Aorta (tissue), 5 donors: ENCODE measurements at regions of chr11 and their contacts with region 1.

Region 1: GRCh38 chr11:81840380-81840779 is 893.3 kb downstream of the FAM181B start:
- DNase-seq: no peak
- ATAC-seq: no peak
- H3K4me3 ChIP-seq: no peak overlapping the region
- H3K27ac ChIP-seq: no peak overlapping the region
- H3K4me1 ChIP-seq: peaks cover 4 to 7% of the 10 kb centered on the region in 2 donors
- H3K27me3 ChIP-seq: no peaks in the 10 kb centered on the region

Region 2: DNA sequence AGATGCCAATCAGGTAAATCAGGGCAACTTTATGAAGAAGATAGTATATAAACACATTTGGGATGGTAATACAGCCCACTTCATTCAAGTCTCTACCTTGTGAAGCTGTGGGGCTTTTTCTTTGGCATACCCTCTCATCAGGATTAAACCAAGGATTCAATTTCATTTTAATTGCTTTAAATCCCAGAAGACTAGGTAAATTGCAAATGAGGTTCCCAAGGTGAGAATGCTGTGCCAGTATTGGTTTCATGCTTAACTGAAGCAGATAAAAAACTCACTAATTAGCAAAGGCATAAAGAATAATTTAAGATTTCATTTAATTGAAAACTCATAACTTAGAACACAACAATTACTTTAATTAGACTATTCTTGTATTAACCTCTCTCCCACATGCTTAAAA is 324.8 kb before region 1 on chr11:
- intact Hi-C with region 1: no loop called
- DNase-seq: no peak
- ATAC-seq: no peak
- H3K4me3 ChIP-seq: no peak overlapping the region
- H3K27ac ChIP-seq: no peak overlapping the region
- H3K4me1 ChIP-seq: no peaks in the 10 kb centered on the region
- H3K27me3 ChIP-seq: no peaks in the 10 kb centered on the region

Region 3: GRCh38 chr11:81802591-81802990 is 37.8 kb before region 1 on chr11:
- intact Hi-C with region 1: no loop called
- DNase-seq: no peak
- ATAC-seq: no peak
- H3K4me3 ChIP-seq: no peak overlapping the region
- H3K27ac ChIP-seq: no peak overlapping the region
- H3K4me1 ChIP-seq: no peaks in the 10 kb centered on the region
- H3K27me3 ChIP-seq: no peaks in the 10 kb centered on the region

Region 4: GRCh38 chr11:81892770-81893635 is 52.6 kb after region 1 on chr11:
- intact Hi-C with region 1: loop called in 1 of 2 experiments (anchors 10 kb)
- DNase-seq: no peak
- ATAC-seq: peak; percentile 44
- H3K4me3 ChIP-seq: no peak overlapping the region
- H3K27ac ChIP-seq: no peak overlapping the region
- H3K4me1 ChIP-seq: no peaks in the 10 kb centered on the region
- H3K27me3 ChIP-seq: no peaks in the 10 kb centered on the region